Natural killer cell (primary cell): ENCODE measurements at regions of chr13 and their contacts with region 1.

Region 1: DNA sequence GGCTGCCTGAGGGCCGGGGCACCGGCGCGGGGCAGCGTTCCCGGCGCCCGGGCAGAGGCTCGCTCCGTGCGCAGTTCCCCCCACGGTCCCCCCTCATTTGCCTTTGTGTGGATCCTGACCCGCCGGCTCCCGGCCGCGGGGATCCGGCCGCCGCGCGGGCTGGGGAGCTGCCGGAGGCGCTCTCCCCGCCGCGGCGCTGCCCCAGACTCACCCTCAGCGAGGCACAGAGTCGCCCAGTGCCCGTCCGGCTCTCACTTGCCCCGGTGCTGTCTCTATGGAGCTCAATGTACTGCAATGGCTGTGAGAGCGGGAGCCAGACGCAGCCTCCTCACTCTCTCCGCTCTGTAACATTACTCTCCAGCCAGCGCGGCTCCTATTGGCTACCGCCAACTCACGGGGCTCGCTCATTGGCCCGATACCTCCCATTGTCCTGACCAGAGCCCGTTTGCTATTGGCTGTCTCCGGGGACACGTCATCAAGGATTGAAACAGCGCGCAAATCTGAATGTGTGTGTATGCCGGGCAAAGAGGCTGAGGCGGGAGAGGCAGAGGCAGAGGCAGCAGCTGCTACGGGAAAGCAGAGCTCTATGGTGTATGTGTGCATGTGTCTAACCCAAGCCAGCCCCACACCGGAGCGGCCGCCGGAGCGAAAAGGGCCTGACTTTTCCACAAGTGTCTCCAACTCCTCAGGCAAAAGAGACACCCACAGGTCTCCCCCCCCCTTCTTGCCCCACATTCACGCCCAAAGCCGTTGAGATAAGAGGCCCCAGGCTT is at the start of gene HMGB1:
- DNase-seq: peak; percentile 97 to 98
- ATAC-seq: peak; percentile 77 to 91 (median 82)
- H3K4me3 ChIP-seq: peak within 1 kb of the TSS; percentile 59
- H3K4me3 Mint-ChIP-seq: peak within 1 kb of the TSS; percentile 96
- H3K27ac ChIP-seq: peak within 1 kb of the TSS; percentile 50
- H3K27ac Mint-ChIP-seq: peak within 1 kb of the TSS; percentile 96 to 98
- H3K4me1 ChIP-seq: peaks cover 13% of the 10 kb centered on the region
- H3K4me1 Mint-ChIP-seq: peaks cover 36 to 44% of the 10 kb centered on the region in 2 donors
- H3K27me3 ChIP-seq: no peaks in the 10 kb centered on the region
- H3K27me3 Mint-ChIP-seq: no peaks in the 10 kb centered on the region
- CTCF ChIP-seq: no peak
- total RNA-seq, gene HMGB1: 397 to 449 (median 409) TPM

Region 2: GRCh38 chr13:30132623-30133553 is 332.9 kb before region 1 on chr13:
- intact Hi-C with region 1: loop called (anchors 2 kb)
- DNase-seq: peak; percentile 95 to 96
- ATAC-seq: peak; percentile 97 to 100 (median 100)
- H3K4me3 ChIP-seq: no peak overlapping the region
- H3K4me3 Mint-ChIP-seq: peak overlapping the region; percentile 78
- H3K27ac ChIP-seq: no peak overlapping the region
- H3K27ac Mint-ChIP-seq: peak overlapping the region; percentile 29 to 78
- H3K4me1 ChIP-seq: peaks cover 12% of the 10 kb centered on the region
- H3K4me1 Mint-ChIP-seq: peaks cover 20 to 23% of the 10 kb centered on the region in 2 donors
- H3K27me3 ChIP-seq: no peaks in the 10 kb centered on the region
- H3K27me3 Mint-ChIP-seq: no peaks in the 10 kb centered on the region
- CTCF ChIP-seq: peak; percentile 95

Region 3: GRCh38 chr13:30306762-30307193 is 159.0 kb before region 1 on chr13:
- intact Hi-C with region 1: loop called (anchors 2 kb)
- DNase-seq: peak; percentile 82 to 95
- ATAC-seq: peak; percentile 88 to 96 (median 94)
- H3K4me3 ChIP-seq: peak overlapping the region; percentile 83
- H3K4me3 Mint-ChIP-seq: peak overlapping the region; percentile 88
- H3K27ac ChIP-seq: peak overlapping the region; percentile 79
- H3K27ac Mint-ChIP-seq: peak overlapping the region; percentile 42 to 89
- H3K4me1 ChIP-seq: peaks cover 12% of the 10 kb centered on the region
- H3K4me1 Mint-ChIP-seq: peaks cover 4 to 18% of the 10 kb centered on the region in 2 donors
- H3K27me3 ChIP-seq: no peaks in the 10 kb centered on the region
- H3K27me3 Mint-ChIP-seq: no peaks in the 10 kb centered on the region
- CTCF ChIP-seq: no peak

Region 4: GRCh38 chr13:30371649-30372265 is 94.0 kb before region 1 on chr13:
- intact Hi-C with region 1: loop called (anchors 2 kb)
- DNase-seq: peak in 1 of 2 donors; percentile 88
- ATAC-seq: peak in 2 of 3 donors; percentile 27 to 53
- H3K4me3 ChIP-seq: no peak overlapping the region
- H3K4me3 Mint-ChIP-seq: peak overlapping the region; percentile 56
- H3K27ac ChIP-seq: peak overlapping the region; percentile 64
- H3K27ac Mint-ChIP-seq: peak overlapping the region; percentile 84 to 98
- H3K4me1 ChIP-seq: peaks cover 81% of the 10 kb centered on the region
- H3K4me1 Mint-ChIP-seq: peaks cover 68 to 78% of the 10 kb centered on the region in 2 donors
- H3K27me3 ChIP-seq: no peaks in the 10 kb centered on the region
- H3K27me3 Mint-ChIP-seq: no peaks in the 10 kb centered on the region
- CTCF ChIP-seq: no peak

Region 5: DNA sequence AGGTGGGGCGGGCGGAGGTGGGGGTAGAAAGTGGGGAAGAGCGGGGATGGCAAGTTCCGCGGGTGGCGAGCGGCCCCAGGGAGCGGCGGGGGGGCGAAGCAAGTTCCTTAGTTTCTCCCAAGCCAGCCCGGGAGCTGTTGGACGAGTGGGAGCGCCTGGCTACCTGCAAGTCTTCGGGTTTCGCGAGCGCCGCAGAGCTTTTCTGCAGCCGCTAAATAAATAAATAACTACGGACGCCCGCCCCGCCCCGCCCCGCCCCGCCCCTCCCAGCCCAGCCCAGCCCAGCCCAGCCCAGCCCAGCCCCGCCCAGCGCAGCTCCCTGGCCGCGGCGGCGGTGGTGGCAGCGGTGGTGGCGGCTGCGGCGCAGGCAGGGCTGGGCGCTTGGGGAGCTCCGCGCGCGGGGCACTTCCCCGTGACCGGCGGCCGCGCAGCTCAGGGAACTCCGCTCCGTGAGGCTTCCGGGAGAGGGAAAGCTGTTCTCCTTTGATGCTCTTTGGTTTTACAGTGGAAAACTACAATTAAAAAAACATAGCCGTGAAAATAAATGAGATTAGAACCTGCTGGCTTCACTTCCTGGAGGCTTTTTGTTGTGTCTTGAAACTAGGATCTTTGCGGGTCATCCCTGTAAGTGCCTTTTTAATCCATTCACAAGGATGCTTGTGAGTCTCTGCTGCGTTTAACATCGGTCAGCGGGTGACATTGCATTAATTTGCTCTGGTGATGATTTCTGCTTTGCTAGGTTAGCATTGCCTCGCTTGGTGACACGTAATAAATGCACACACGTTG is 43.5 kb before region 1 on chr13 and contains the start of gene UBE2L5:
- intact Hi-C with region 1: loop called (anchors 5 kb)
- DNase-seq: peak; percentile 67 to 81
- ATAC-seq: peak; percentile 91 to 92 (median 92)
- H3K4me3 ChIP-seq: peak within 1 kb of the TSS; percentile 63
- H3K4me3 Mint-ChIP-seq: peak within 1 kb of the TSS; percentile 94
- H3K27ac ChIP-seq: peak within 1 kb of the TSS; percentile 33
- H3K27ac Mint-ChIP-seq: peak within 1 kb of the TSS; percentile 65 to 81
- H3K4me1 ChIP-seq: peaks cover 9% of the 10 kb centered on the region
- H3K4me1 Mint-ChIP-seq: peaks cover 11 to 15% of the 10 kb centered on the region in 2 donors
- H3K27me3 ChIP-seq: no peaks in the 10 kb centered on the region
- H3K27me3 Mint-ChIP-seq: no peaks in the 10 kb centered on the region
- CTCF ChIP-seq: no peak
- total RNA-seq, gene UBE2L5: not detected

Region 6: GRCh38 chr13:30617315-30618185 is 151.8 kb after region 1 on chr13 and contains the start of gene USPL1:
- intact Hi-C with region 1: loop called (anchors 1 kb)
- DNase-seq: peak; percentile 98 to 100
- ATAC-seq: peak; percentile 84 to 96 (median 88)
- H3K4me3 ChIP-seq: peak within 1 kb of the TSS; percentile 100
- H3K4me3 Mint-ChIP-seq: no peak within 1 kb of the TSS
- H3K27ac ChIP-seq: peak within 1 kb of the TSS; percentile 98
- H3K27ac Mint-ChIP-seq: no peak within 1 kb of the TSS
- H3K4me1 ChIP-seq: peaks cover 7% of the 10 kb centered on the region
- H3K4me1 Mint-ChIP-seq: peaks cover 0 to 5% of the 10 kb centered on the region in 2 donors
- H3K27me3 ChIP-seq: no peaks in the 10 kb centered on the region
- H3K27me3 Mint-ChIP-seq: no peaks in the 10 kb centered on the region
- CTCF ChIP-seq: no peak
- total RNA-seq, gene USPL1: 34.8 to 39.0 (median 36.9) TPM

Region 7: DNA sequence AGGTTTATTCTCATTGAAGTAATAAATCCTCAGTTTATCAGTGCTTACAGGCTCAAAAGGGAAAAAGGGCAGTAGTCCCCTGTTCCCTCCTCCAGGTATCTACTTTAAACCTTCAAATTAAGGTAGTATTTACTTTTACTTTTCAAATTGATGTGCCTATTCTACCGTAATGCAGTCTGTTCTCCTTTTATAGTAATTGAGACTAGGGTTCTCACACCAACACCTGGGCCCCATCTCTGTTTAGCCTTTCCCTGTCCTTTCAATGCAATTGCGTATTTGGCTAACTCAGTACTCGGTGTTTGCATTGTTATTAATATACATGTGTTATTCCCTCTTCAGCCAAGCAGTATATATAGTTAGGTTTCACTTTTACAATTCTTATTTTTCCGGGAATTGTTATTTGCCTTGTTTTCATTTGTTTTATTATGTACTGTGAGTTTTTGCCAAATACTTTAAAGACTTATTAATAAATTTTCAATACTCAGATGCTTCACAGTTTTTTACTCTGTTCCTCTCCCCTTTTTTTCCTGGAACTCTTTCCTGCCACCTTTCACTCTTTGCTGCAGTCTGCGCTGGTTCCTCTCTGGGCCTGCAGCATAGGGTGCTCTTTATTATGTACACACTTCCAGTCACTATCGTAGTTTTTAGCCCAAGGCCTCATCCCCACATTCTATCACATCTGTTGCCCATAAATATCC is 182.2 kb after region 1 on chr13:
- intact Hi-C with region 1: no loop called
- DNase-seq: no peak
- ATAC-seq: no peak
- H3K4me3 ChIP-seq: no peak overlapping the region
- H3K4me3 Mint-ChIP-seq: no peak overlapping the region
- H3K27ac ChIP-seq: peak overlapping the region; percentile 21
- H3K27ac Mint-ChIP-seq: peak overlapping the region in 1 of 2 donors; percentile 21
- H3K4me1 ChIP-seq: no peaks in the 10 kb centered on the region
- H3K4me1 Mint-ChIP-seq: peaks cover 11 to 19% of the 10 kb centered on the region in 2 donors
- H3K27me3 ChIP-seq: no peaks in the 10 kb centered on the region
- H3K27me3 Mint-ChIP-seq: no peaks in the 10 kb centered on the region
- CTCF ChIP-seq: no peak